ENCODE measurements at regions of chr14 and their contacts with region 1.

Region 1: GRCh38 chr14:89618811-89619551 is 201.9 kb upstream of the FOXN3 start:
- DNase-seq: peak; percentile 43 to 87 (median 66)
- ATAC-seq: peak; percentile 44
- H3K4me3 ChIP-seq: peak overlapping the region; percentile 64 to 73
- H3K4me3 Mint-ChIP-seq: peak overlapping the region; percentile 97
- H3K27ac ChIP-seq: peak overlapping the region; percentile 89 to 90
- H3K27ac Mint-ChIP-seq: peak overlapping the region; percentile 98
- H3K4me1 ChIP-seq: peaks cover 54% of the 10 kb centered on the region
- H3K4me1 Mint-ChIP-seq: peaks cover 68% of the 10 kb centered on the region
- H3K27me3 ChIP-seq: no peaks in the 10 kb centered on the region
- H3K27me3 Mint-ChIP-seq: no peaks in the 10 kb centered on the region
- CTCF ChIP-seq: no peak

Region 2: GRCh38 chr14:89399594-89400068 is 219.3 kb before region 1 on chr14:
- CTCF ChIA-PET with region 1: no interaction called
- POLR2A ChIA-PET with region 1: no interaction called
- intact Hi-C with region 1: no loop called
- DNase-seq: peak in 1 of 9 experiments; percentile 22
- ATAC-seq: no peak
- H3K4me3 ChIP-seq: no peak overlapping the region
- H3K4me3 Mint-ChIP-seq: no peak overlapping the region
- H3K27ac ChIP-seq: no peak overlapping the region
- H3K27ac Mint-ChIP-seq: peak overlapping the region; percentile 14
- H3K4me1 ChIP-seq: peaks cover 12% of the 10 kb centered on the region
- H3K4me1 Mint-ChIP-seq: peaks cover 78% of the 10 kb centered on the region
- H3K27me3 ChIP-seq: no peaks in the 10 kb centered on the region
- H3K27me3 Mint-ChIP-seq: no peaks in the 10 kb centered on the region
- CTCF ChIP-seq: no peak

Region 3: GRCh38 chr14:89600950-89601826 is 17.8 kb before region 1 on chr14:
- CTCF ChIA-PET with region 1: interaction called, 3 read pairs
- POLR2A ChIA-PET with region 1: no interaction called
- intact Hi-C with region 1: loop called in 1 of 2 experiments (anchors 2 kb)
- DNase-seq: no peak
- ATAC-seq: no peak
- H3K4me3 ChIP-seq: no peak overlapping the region
- H3K4me3 Mint-ChIP-seq: no peak overlapping the region
- H3K27ac ChIP-seq: no peak overlapping the region
- H3K27ac Mint-ChIP-seq: peak overlapping the region; percentile 47
- H3K4me1 ChIP-seq: peaks cover 36% of the 10 kb centered on the region
- H3K4me1 Mint-ChIP-seq: peaks cover 61% of the 10 kb centered on the region
- H3K27me3 ChIP-seq: no peaks in the 10 kb centered on the region
- H3K27me3 Mint-ChIP-seq: no peaks in the 10 kb centered on the region
- CTCF ChIP-seq: no peak

Region 4: GRCh38 chr14:89641495-89642175 is 22.7 kb after region 1 on chr14:
- CTCF ChIA-PET with region 1: interaction called, 3 read pairs
- POLR2A ChIA-PET with region 1: interaction called, 11 read pairs
- intact Hi-C with region 1: loop called in 1 of 2 experiments (anchors 1 kb)
- DNase-seq: peak in 2 of 9 experiments; percentile 47 to 68
- ATAC-seq: peak; percentile 71
- H3K4me3 ChIP-seq: peak overlapping the region; percentile 18 to 19
- H3K4me3 Mint-ChIP-seq: peak overlapping the region; percentile 58
- H3K27ac ChIP-seq: peak overlapping the region; percentile 27 to 68
- H3K27ac Mint-ChIP-seq: peak overlapping the region; percentile 82
- H3K4me1 ChIP-seq: peaks cover 19% of the 10 kb centered on the region
- H3K4me1 Mint-ChIP-seq: peaks cover 51% of the 10 kb centered on the region
- H3K27me3 ChIP-seq: no peaks in the 10 kb centered on the region
- H3K27me3 Mint-ChIP-seq: no peaks in the 10 kb centered on the region
- CTCF ChIP-seq: no peak

Region 5: GRCh38 chr14:89690139-89690538 is 71.2 kb after region 1 on chr14:
- CTCF ChIA-PET with region 1: no interaction called
- POLR2A ChIA-PET with region 1: no interaction called
- intact Hi-C with region 1: loop called in 1 of 2 experiments (anchors 1 kb)
- DNase-seq: no peak
- ATAC-seq: no peak
- H3K4me3 ChIP-seq: no peak overlapping the region
- H3K4me3 Mint-ChIP-seq: no peak overlapping the region
- H3K27ac ChIP-seq: no peak overlapping the region
- H3K27ac Mint-ChIP-seq: no peak overlapping the region
- H3K4me1 ChIP-seq: no peaks in the 10 kb centered on the region
- H3K4me1 Mint-ChIP-seq: peaks cover 10% of the 10 kb centered on the region
- H3K27me3 ChIP-seq: no peaks in the 10 kb centered on the region
- H3K27me3 Mint-ChIP-seq: no peaks in the 10 kb centered on the region
- CTCF ChIP-seq: no peak

Region 6: DNA sequence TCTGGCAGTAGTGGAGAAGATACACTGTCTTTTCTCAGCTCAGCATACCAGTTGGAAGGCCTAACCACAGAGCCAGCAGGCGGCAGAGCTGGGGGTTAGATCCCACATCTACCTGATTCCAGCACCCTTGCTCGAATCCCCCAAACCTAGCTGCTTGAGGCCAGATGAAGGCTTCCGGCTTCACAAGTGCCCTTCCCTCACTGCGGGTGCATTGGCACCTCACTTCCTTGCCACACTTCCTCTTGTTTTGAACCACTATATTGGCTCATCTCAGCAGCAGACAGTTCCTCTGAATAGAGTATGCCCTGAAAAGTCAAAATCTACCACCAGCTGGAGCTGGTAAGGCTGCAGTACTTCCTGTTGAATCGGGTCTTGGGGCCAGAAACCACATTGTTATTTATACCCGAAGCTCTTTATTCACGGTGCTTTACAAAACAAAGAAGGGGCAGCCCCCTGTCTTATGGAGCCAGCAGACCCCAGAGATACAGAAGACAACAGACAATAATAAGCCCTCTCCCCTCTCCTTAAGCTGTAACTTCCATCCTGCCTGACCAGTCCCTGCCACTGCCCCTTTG is 101.8 kb after region 1 on chr14:
- CTCF ChIA-PET with region 1: interaction called, 11 read pairs
- POLR2A ChIA-PET with region 1: interaction called, 22 read pairs
- intact Hi-C with region 1: loop called (anchors 1 to 2 kb)
- DNase-seq: peak; percentile 63 to 96 (median 77)
- ATAC-seq: peak; percentile 89
- H3K4me3 ChIP-seq: peak overlapping the region; percentile 17 to 29
- H3K4me3 Mint-ChIP-seq: peak overlapping the region; percentile 64
- H3K27ac ChIP-seq: peak overlapping the region; percentile 70 to 89
- H3K27ac Mint-ChIP-seq: peak overlapping the region; percentile 97
- H3K4me1 ChIP-seq: peaks cover 86% of the 10 kb centered on the region
- H3K4me1 Mint-ChIP-seq: peaks cover 85% of the 10 kb centered on the region
- H3K27me3 ChIP-seq: no peaks in the 10 kb centered on the region
- H3K27me3 Mint-ChIP-seq: no peaks in the 10 kb centered on the region
- CTCF ChIP-seq: no peak

Region 7: DNA sequence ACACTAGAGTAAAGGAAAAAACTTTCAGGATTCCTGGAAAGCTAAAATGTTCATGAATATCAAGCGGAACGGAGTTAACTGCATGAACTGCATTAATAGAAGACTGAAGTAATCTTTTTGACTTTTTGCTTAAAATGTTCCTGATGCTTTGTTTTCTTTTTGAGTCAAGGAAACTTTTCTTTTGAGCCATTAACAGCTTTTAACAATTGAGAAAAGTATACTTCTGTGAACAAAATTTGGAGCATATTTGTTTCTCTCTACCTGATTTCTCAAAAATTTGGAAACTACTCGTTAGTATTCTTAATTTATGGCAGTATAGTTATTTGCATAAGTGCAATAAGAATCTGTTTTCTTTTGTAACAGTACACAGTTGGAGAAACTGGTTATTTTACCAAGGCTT is 856.3 kb after region 1 on chr14:
- CTCF ChIA-PET with region 1: no interaction called
- POLR2A ChIA-PET with region 1: no interaction called
- intact Hi-C with region 1: no loop called
- DNase-seq: no peak
- ATAC-seq: no peak
- H3K4me3 ChIP-seq: no peak overlapping the region
- H3K4me3 Mint-ChIP-seq: no peak overlapping the region
- H3K27ac ChIP-seq: no peak overlapping the region
- H3K27ac Mint-ChIP-seq: no peak overlapping the region
- H3K4me1 ChIP-seq: no peaks in the 10 kb centered on the region
- H3K4me1 Mint-ChIP-seq: no peaks in the 10 kb centered on the region
- H3K27me3 ChIP-seq: peaks cover 0 to 3% of the 10 kb centered on the region in 2 experiments
- H3K27me3 Mint-ChIP-seq: peaks cover 6% of the 10 kb centered on the region
- CTCF ChIP-seq: no peak